ENCODE measurements at regions of chr5 and their contacts with region 1.

Region 1: GRCh38 chr5:131109540-131110255 is 55.4 kb downstream of the HINT1 start:
- DNase-seq: no peak
- ATAC-seq: peak; percentile 73
- H3K4me3 ChIP-seq: no peak overlapping the region
- H3K27ac ChIP-seq: no peak overlapping the region
- H3K4me1 ChIP-seq: no peaks in the 10 kb centered on the region
- H3K27me3 ChIP-seq: no peaks in the 10 kb centered on the region

Region 2: GRCh38 chr5:129664337-129664937 is 1445.3 kb before region 1 on chr5:
- intact Hi-C with region 1: loop called in 1 of 2 experiments (anchors 10 kb)
- DNase-seq: peak; percentile 50 to 52
- ATAC-seq: no peak
- H3K4me3 ChIP-seq: no peak overlapping the region
- H3K27ac ChIP-seq: no peak overlapping the region
- H3K4me1 ChIP-seq: no peaks in the 10 kb centered on the region
- H3K27me3 ChIP-seq: no peaks in the 10 kb centered on the region

Region 3: DNA sequence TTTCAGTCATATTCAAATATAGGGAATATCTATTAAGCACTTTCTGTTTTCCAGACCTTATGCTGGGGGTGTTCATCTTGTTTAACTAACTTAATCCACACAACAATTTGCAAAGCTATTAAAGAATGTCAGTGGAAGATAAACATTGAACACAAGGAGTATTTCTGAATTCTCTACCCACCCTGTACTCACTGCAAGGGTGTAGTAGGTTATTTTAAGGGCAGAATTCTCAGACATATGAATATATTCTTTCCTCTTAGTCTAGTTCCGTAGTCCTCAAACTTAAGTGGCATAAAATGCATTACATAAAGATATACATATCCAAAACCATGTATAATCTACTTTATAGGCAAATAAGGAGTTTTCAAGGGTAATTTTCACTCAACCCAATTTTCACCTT is 1225.4 kb before region 1 on chr5:
- intact Hi-C with region 1: loop called in 1 of 2 experiments (anchors 10 kb)
- DNase-seq: no peak
- ATAC-seq: no peak
- H3K4me3 ChIP-seq: no peak overlapping the region
- H3K27ac ChIP-seq: no peak overlapping the region
- H3K4me1 ChIP-seq: no peaks in the 10 kb centered on the region
- H3K27me3 ChIP-seq: no peaks in the 10 kb centered on the region

Measured in aorta (tissue), 5 donors.